CD8-positive, alpha-beta T cell (primary cell): ENCODE measurements at regions of chr17 and their contacts with region 1.

Region 1: DNA sequence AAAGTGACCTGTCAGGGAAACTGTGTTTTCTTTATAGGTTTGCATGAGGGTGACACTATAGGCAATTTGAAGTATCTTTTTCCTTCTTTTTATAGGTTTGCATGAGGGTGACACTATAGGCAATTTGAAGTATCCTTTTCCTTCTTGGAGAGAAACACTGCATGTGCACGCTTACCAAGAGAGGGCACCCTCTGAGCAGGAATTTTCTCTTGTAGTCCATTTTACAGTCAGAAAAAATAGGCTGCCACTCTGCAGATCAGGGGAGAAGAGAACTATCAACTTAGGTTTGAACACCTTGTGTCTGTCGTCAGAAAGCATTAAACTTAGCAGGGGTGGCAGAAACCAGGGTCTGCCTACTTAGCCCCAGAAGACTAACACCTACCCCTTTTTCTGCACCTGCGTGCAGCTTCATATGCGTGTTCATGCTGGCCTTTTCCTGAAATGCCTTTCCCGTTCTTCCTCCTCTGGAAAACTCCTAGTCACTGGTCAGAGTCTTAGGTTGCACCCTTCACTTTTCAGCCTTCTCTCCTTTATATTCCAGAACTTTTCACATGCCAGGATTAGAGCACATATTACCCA is 16.4 kb upstream of the SMIM36 start:
- DNase-seq: no peak
- ATAC-seq: no peak
- H3K4me3 ChIP-seq: no peak overlapping the region
- H3K4me3 Mint-ChIP-seq: no peak overlapping the region
- H3K27ac ChIP-seq: no peak overlapping the region
- H3K27ac Mint-ChIP-seq: no peak overlapping the region
- H3K4me1 ChIP-seq: no peaks in the 10 kb centered on the region
- H3K4me1 Mint-ChIP-seq: no peaks in the 10 kb centered on the region
- H3K27me3 ChIP-seq: no peaks in the 10 kb centered on the region
- H3K27me3 Mint-ChIP-seq: peaks cover 6% of the 10 kb centered on the region
- CTCF ChIP-seq: no peak

Region 2: GRCh38 chr17:55601874-55602364 is 74.3 kb after region 1 on chr17:
- CTCF ChIA-PET with region 1: interaction called, 31 read pairs
- POLR2A ChIA-PET with region 1: no interaction called
- intact Hi-C with region 1: loop called (anchors 1 kb)
- DNase-seq: peak in 2 of 9 experiments; percentile 22 to 30
- ATAC-seq: no peak
- H3K4me3 ChIP-seq: no peak overlapping the region
- H3K4me3 Mint-ChIP-seq: no peak overlapping the region
- H3K27ac ChIP-seq: no peak overlapping the region
- H3K27ac Mint-ChIP-seq: no peak overlapping the region
- H3K4me1 ChIP-seq: no peaks in the 10 kb centered on the region
- H3K4me1 Mint-ChIP-seq: no peaks in the 10 kb centered on the region
- H3K27me3 ChIP-seq: peaks cover 0 to 2% of the 10 kb centered on the region in 2 experiments
- H3K27me3 Mint-ChIP-seq: peaks cover 13% of the 10 kb centered on the region
- CTCF ChIP-seq: peak; percentile 21

Region 3: DNA sequence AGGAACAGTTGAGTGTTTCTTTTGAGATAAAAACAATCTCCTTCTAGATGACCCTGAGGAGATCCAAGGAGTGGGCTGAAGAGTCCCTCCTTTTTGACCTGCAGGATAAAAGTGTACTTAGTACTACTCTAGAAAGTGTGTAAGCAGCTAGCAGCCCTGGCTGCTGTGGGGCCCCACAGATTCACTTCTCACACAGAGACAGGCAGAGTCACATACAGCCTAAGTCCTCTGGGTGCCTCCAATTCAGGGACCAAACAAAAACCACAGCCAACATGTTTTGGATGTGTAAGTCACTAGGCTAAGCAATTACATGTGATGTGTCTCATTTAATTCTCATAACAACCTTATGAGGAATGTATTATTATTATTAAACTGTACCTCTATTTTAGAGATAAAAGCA is 97.9 kb after region 1 on chr17:
- CTCF ChIA-PET with region 1: no interaction called
- POLR2A ChIA-PET with region 1: no interaction called
- intact Hi-C with region 1: no loop called
- DNase-seq: no peak
- ATAC-seq: no peak
- H3K4me3 ChIP-seq: no peak overlapping the region
- H3K4me3 Mint-ChIP-seq: no peak overlapping the region
- H3K27ac ChIP-seq: no peak overlapping the region
- H3K27ac Mint-ChIP-seq: no peak overlapping the region
- H3K4me1 ChIP-seq: no peaks in the 10 kb centered on the region
- H3K4me1 Mint-ChIP-seq: no peaks in the 10 kb centered on the region
- H3K27me3 ChIP-seq: no peaks in the 10 kb centered on the region
- H3K27me3 Mint-ChIP-seq: peaks cover 9% of the 10 kb centered on the region
- CTCF ChIP-seq: no peak

Region 4: GRCh38 chr17:55717898-55718735 is 190.5 kb after region 1 on chr17:
- CTCF ChIA-PET with region 1: interaction called, 14 read pairs
- POLR2A ChIA-PET with region 1: no interaction called
- intact Hi-C with region 1: loop called (anchors 1 kb)
- DNase-seq: peak; percentile 10 to 64 (median 45)
- ATAC-seq: no peak
- H3K4me3 ChIP-seq: no peak overlapping the region
- H3K4me3 Mint-ChIP-seq: no peak overlapping the region
- H3K27ac ChIP-seq: no peak overlapping the region
- H3K27ac Mint-ChIP-seq: no peak overlapping the region
- H3K4me1 ChIP-seq: no peaks in the 10 kb centered on the region
- H3K4me1 Mint-ChIP-seq: no peaks in the 10 kb centered on the region
- H3K27me3 ChIP-seq: no peaks in the 10 kb centered on the region
- H3K27me3 Mint-ChIP-seq: peaks cover 16% of the 10 kb centered on the region
- CTCF ChIP-seq: peak; percentile 66

Region 5: DNA sequence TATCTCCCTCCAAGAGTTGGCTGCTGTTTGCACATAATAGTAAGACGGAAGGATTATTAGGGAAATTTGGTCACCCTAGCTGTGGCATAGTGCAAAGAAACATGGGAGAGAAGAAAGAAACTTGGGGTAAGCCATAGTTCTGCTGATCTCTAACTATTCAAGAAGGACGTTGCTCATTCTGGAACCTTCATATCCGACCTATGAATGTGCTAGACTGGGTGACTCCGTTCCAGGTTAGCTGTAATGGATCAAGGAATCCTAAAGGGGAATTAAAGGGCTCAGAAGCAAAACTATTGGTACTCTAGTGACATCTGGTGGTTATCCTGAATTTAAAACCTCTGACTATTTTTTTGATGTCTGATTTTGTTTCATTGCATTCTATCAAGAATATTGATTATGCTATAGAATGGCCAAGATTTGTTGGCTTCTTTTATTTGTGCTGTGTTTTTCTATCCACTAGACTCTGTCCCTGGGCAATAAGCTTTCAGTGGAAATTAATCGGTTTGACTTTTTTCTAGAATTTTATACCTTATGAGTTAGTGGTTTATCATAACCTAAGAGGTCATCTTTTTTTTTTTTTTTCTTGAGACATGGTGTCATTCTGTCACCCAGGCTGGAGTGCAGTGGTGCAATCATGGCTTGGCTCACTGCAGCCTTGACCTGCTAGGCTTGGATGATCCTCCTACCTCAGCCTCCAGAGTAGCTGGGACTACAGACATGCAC is 242.7 kb after region 1 on chr17:
- CTCF ChIA-PET with region 1: interaction called, 15 read pairs
- POLR2A ChIA-PET with region 1: no interaction called
- intact Hi-C with region 1: loop called in 1 of 2 experiments (anchors 1 kb)
- DNase-seq: peak in 2 of 9 experiments; percentile 10 to 20
- ATAC-seq: no peak
- H3K4me3 ChIP-seq: no peak overlapping the region
- H3K4me3 Mint-ChIP-seq: no peak overlapping the region
- H3K27ac ChIP-seq: no peak overlapping the region
- H3K27ac Mint-ChIP-seq: no peak overlapping the region
- H3K4me1 ChIP-seq: no peaks in the 10 kb centered on the region
- H3K4me1 Mint-ChIP-seq: no peaks in the 10 kb centered on the region
- H3K27me3 ChIP-seq: no peaks in the 10 kb centered on the region
- H3K27me3 Mint-ChIP-seq: no peaks in the 10 kb centered on the region
- CTCF ChIP-seq: no peak

Region 6: GRCh38 chr17:55883149-55883548 is 355.5 kb after region 1 on chr17:
- CTCF ChIA-PET with region 1: no interaction called
- POLR2A ChIA-PET with region 1: no interaction called
- intact Hi-C with region 1: no loop called
- DNase-seq: no peak
- ATAC-seq: no peak
- H3K4me3 ChIP-seq: no peak overlapping the region
- H3K4me3 Mint-ChIP-seq: no peak overlapping the region
- H3K27ac ChIP-seq: no peak overlapping the region
- H3K27ac Mint-ChIP-seq: no peak overlapping the region
- H3K4me1 ChIP-seq: no peaks in the 10 kb centered on the region
- H3K4me1 Mint-ChIP-seq: no peaks in the 10 kb centered on the region
- H3K27me3 ChIP-seq: peaks cover 0 to 2% of the 10 kb centered on the region in 2 experiments
- H3K27me3 Mint-ChIP-seq: peaks cover 6% of the 10 kb centered on the region
- CTCF ChIP-seq: no peak

Region 7: DNA sequence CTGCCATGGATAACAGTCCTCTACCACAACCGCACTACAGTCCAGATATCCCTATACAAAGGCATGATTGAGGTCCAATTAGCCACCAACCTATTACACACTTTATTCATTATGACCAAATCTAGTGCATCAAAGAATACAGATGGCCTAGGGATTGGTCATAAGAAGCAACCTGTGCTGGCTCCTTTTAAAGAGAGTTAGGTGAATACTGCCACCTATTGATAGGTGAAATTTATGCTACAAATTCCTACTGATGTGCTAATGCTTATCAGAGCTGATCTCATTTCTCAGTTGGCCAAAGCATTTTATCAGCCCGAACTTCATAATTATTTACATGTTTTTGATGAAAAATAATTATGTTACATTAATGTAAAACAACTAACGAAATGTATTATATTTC is 791.9 kb after region 1 on chr17:
- CTCF ChIA-PET with region 1: interaction called, 3 read pairs
- POLR2A ChIA-PET with region 1: no interaction called
- intact Hi-C with region 1: loop called in 1 of 2 experiments (anchors 5 kb)
- DNase-seq: peak in 2 of 9 experiments; percentile 8 to 37
- ATAC-seq: no peak
- H3K4me3 ChIP-seq: no peak overlapping the region
- H3K4me3 Mint-ChIP-seq: no peak overlapping the region
- H3K27ac ChIP-seq: no peak overlapping the region
- H3K27ac Mint-ChIP-seq: no peak overlapping the region
- H3K4me1 ChIP-seq: no peaks in the 10 kb centered on the region
- H3K4me1 Mint-ChIP-seq: no peaks in the 10 kb centered on the region
- H3K27me3 ChIP-seq: no peaks in the 10 kb centered on the region
- H3K27me3 Mint-ChIP-seq: peaks cover 4% of the 10 kb centered on the region
- CTCF ChIP-seq: peak; percentile 16

Region 8: GRCh38 chr17:56478836-56479447 is 951.3 kb after region 1 on chr17:
- CTCF ChIA-PET with region 1: interaction called, 3 read pairs
- POLR2A ChIA-PET with region 1: no interaction called
- intact Hi-C with region 1: loop called in 1 of 2 experiments (anchors 10 kb)
- DNase-seq: peak in 2 of 9 experiments; percentile 7 to 33
- ATAC-seq: no peak
- H3K4me3 ChIP-seq: no peak overlapping the region
- H3K4me3 Mint-ChIP-seq: no peak overlapping the region
- H3K27ac ChIP-seq: no peak overlapping the region
- H3K27ac Mint-ChIP-seq: no peak overlapping the region
- H3K4me1 ChIP-seq: no peaks in the 10 kb centered on the region
- H3K4me1 Mint-ChIP-seq: peaks cover 4% of the 10 kb centered on the region
- H3K27me3 ChIP-seq: no peaks in the 10 kb centered on the region
- H3K27me3 Mint-ChIP-seq: peaks cover 2% of the 10 kb centered on the region
- CTCF ChIP-seq: peak; percentile 55

Region 9: GRCh38 chr17:56779898-56780733 is 1252.5 kb after region 1 on chr17:
- CTCF ChIA-PET with region 1: interaction called, 5 read pairs
- POLR2A ChIA-PET with region 1: no interaction called
- intact Hi-C with region 1: loop called in 1 of 2 experiments (anchors 2 kb)
- DNase-seq: peak; percentile 77 to 93 (median 84)
- ATAC-seq: peak; percentile 97
- H3K4me3 ChIP-seq: peak overlapping the region; percentile 44 to 61
- H3K4me3 Mint-ChIP-seq: peak overlapping the region; percentile 93
- H3K27ac ChIP-seq: peak overlapping the region; percentile 63 to 71
- H3K27ac Mint-ChIP-seq: peak overlapping the region; percentile 95
- H3K4me1 ChIP-seq: peaks cover 14% of the 10 kb centered on the region
- H3K4me1 Mint-ChIP-seq: peaks cover 18% of the 10 kb centered on the region
- H3K27me3 ChIP-seq: no peaks in the 10 kb centered on the region
- H3K27me3 Mint-ChIP-seq: no peaks in the 10 kb centered on the region
- CTCF ChIP-seq: peak; percentile 99